ENCODE measurements at regions of chr11 and their contacts with region 1.

Region 1: GRCh38 chr11:45771566-45772448 is 33.1 kb upstream of the SLC35C1 start:
- DNase-seq: peak; percentile 92
- ATAC-seq: peak; percentile 93
- H3K4me3 Mint-ChIP-seq: peak overlapping the region; percentile 78
- H3K27ac Mint-ChIP-seq: no peak overlapping the region
- H3K4me1 Mint-ChIP-seq: peaks cover 2% of the 10 kb centered on the region; the same call in 1 of the 2 replicates
- H3K27me3 Mint-ChIP-seq: peaks cover 12% of the 10 kb centered on the region
- CTCF ChIP-seq: peak; percentile 65

Region 2: GRCh38 chr11:45339729-45340519 is 431.9 kb before region 1 on chr11:
- CTCF ChIA-PET with region 1: interaction called, 62 read pairs
- POLR2A ChIA-PET with region 1: no interaction called
- DNase-seq: peak; percentile 98
- ATAC-seq: peak; percentile 99
- H3K4me3 Mint-ChIP-seq: peak overlapping the region; percentile 58
- H3K27ac Mint-ChIP-seq: peak overlapping the region; percentile 26; the same call in 1 of the 2 replicates
- H3K4me1 Mint-ChIP-seq: peaks cover 40% of the 10 kb centered on the region
- H3K27me3 Mint-ChIP-seq: no peaks in the 10 kb centered on the region; the same call in 1 of the 2 replicates
- CTCF ChIP-seq: peak; percentile 95

Region 3: GRCh38 chr11:45400591-45400990 is 371.2 kb before region 1 on chr11:
- CTCF ChIA-PET with region 1: interaction called, 22 read pairs
- POLR2A ChIA-PET with region 1: no interaction called
- DNase-seq: no peak
- ATAC-seq: no peak
- H3K4me3 Mint-ChIP-seq: no peak overlapping the region
- H3K27ac Mint-ChIP-seq: no peak overlapping the region
- H3K4me1 Mint-ChIP-seq: peaks cover 19% of the 10 kb centered on the region
- H3K27me3 Mint-ChIP-seq: no peaks in the 10 kb centered on the region
- CTCF ChIP-seq: no peak

Region 4: DNA sequence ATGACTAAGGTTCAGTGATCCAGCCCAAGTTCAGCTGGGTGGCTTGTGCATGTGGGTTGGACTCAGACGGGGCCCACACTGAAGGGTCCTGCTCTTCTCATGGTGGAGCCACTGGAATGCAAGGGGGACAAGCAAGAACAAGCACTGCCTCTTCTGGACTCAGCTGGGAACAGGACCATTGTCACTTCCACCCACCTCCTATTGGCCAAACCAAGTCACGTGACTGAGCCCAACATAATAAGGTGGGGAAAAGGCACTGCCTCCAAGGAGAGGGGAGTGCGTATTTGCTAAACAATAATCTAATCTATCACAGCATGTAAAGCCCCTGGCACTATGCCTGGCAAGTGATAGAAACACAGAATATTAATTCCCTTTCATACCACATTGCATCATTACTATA is 193.5 kb before region 1 on chr11:
- CTCF ChIA-PET with region 1: interaction called, 19 read pairs
- POLR2A ChIA-PET with region 1: no interaction called
- DNase-seq: no peak
- ATAC-seq: no peak; the same call in 1 of the 2 replicates
- H3K4me3 Mint-ChIP-seq: no peak overlapping the region
- H3K27ac Mint-ChIP-seq: no peak overlapping the region
- H3K4me1 Mint-ChIP-seq: peaks cover 17% of the 10 kb centered on the region
- H3K27me3 Mint-ChIP-seq: peaks cover 5% of the 10 kb centered on the region
- CTCF ChIP-seq: no peak

Region 5: GRCh38 chr11:45676522-45677095 is 95.2 kb before region 1 on chr11:
- CTCF ChIA-PET with region 1: interaction called, 41 read pairs
- POLR2A ChIA-PET with region 1: no interaction called
- DNase-seq: no peak
- ATAC-seq: no peak
- H3K4me3 Mint-ChIP-seq: no peak overlapping the region
- H3K27ac Mint-ChIP-seq: no peak overlapping the region
- H3K4me1 Mint-ChIP-seq: 0 out of 2 replicates have a peak, but pooled peaks cover 2% of the 10 kb centered on the region
- H3K27me3 Mint-ChIP-seq: no peaks in the 10 kb centered on the region
- CTCF ChIP-seq: no peak

Region 6: DNA sequence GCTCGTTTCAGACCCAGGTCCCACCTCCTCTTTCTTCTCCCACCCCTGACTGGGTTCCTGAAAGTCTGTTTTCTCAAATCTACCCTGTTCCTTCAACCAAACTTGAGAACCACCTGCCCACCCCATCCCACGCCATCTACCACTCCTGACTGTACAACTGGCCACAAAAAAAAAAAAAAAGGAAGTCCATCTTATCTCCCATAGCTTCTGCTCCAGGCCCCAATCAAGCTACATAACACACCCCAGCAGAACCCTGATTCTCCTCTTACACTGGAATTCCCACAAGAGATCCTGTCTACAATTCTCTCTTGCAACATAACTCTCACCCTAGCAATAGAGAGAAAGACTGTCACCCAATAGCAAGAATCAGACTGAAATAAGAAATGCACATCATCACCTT is 67.2 kb before region 1 on chr11:
- CTCF ChIA-PET with region 1: interaction called, 14 read pairs
- POLR2A ChIA-PET with region 1: no interaction called
- DNase-seq: no peak
- ATAC-seq: no peak
- H3K4me3 Mint-ChIP-seq: no peak overlapping the region
- H3K27ac Mint-ChIP-seq: no peak overlapping the region
- H3K4me1 Mint-ChIP-seq: peaks cover 20% of the 10 kb centered on the region
- H3K27me3 Mint-ChIP-seq: peaks cover 10% of the 10 kb centered on the region
- CTCF ChIP-seq: no peak

Region 7: DNA sequence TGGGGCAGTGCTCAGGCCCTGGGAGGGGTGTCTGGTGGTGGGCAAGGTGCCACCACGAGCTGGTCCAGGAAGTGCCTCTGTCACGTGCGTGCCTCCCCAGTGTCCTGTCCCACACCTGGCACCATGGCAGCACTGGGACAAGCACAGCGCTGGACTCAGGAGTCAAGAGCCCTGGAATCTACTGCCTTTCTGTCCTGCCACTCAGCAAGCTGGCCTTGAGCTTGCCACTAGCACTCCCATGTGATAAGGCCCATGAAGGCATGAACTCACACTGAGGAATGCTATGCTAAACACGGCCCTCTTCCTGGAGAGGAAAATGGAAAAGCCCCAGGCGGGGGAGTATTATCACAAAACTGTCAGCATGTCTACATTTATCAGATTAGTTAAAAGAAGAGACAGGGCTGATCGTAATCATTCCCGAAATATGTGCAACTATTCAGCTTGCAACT is 17.5 kb before region 1 on chr11:
- CTCF ChIA-PET with region 1: interaction called, 69 read pairs
- POLR2A ChIA-PET with region 1: no interaction called
- DNase-seq: no peak
- ATAC-seq: no peak
- H3K4me3 Mint-ChIP-seq: no peak overlapping the region
- H3K27ac Mint-ChIP-seq: no peak overlapping the region
- H3K4me1 Mint-ChIP-seq: peaks cover 40% of the 10 kb centered on the region
- H3K27me3 Mint-ChIP-seq: no peaks in the 10 kb centered on the region; the same call in 1 of the 2 replicates
- CTCF ChIP-seq: no peak